Mammary epithelial cell (primary cell): ENCODE measurements at regions of chr9 and their contacts with region 1.

Region 1: GRCh38 chr9:8025551-8025950 is 226.0 kb upstream of the DMAC1 start:
- DNase-seq: no peak
- H3K4me3 ChIP-seq: no peak overlapping the region
- H3K27ac ChIP-seq: no peak overlapping the region
- H3K4me1 ChIP-seq: no peaks in the 10 kb centered on the region
- H3K27me3 ChIP-seq: no peaks in the 10 kb centered on the region
- CTCF ChIP-seq: no peak

Region 2: DNA sequence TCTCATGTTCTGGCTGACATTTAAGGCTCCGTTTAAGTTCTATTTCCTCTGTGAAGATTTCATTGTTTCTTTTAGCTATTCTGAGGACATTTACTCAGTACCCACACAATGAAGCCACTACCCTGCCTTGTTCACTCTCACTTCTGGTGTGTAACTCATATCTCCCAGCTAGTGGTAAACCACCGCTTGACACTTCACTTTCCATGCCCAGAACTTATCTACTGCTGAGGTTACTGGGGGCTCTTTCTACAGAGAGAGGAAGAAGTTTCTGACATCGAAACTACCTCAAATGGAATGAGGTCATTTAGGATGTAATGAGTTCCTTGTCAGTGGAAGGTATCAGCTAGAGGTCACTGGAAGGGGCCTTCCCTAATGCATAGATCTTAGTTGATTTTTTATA is 727.4 kb before region 1 on chr9:
- CTCF ChIA-PET with region 1: interaction called, 11 read pairs
- dilution Hi-C with region 1: no loop called
- in situ Hi-C with region 1: no loop called
- intact Hi-C with region 1: no loop called
- DNase-seq: no peak
- H3K4me3 ChIP-seq: no peak overlapping the region
- H3K27ac ChIP-seq: no peak overlapping the region
- H3K4me1 ChIP-seq: no peaks in the 10 kb centered on the region
- H3K27me3 ChIP-seq: peaks cover 4% of the 10 kb centered on the region
- CTCF ChIP-seq: no peak

Region 3: DNA sequence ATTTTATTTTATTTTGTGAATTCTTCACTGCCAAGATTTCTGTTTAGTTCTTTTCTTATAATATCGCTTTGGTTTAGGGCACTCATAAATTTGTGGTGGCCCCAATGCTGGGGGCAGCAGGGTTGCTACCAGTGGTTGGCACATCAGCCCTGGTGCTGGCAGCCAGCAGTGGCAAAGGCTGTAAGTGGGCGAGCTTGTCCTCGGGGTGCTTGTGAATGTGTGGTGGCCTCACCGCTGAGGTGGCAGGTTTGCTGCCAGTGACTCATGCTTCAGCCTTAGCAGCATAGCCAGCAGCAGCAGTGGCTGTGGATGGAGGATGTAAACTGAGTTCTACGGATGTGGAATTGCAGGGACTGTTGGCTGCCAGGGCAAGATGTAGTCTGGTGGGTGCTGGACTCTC is 36.9 kb after region 1 on chr9:
- CTCF ChIA-PET with region 1: no interaction called
- dilution Hi-C with region 1: no loop called
- in situ Hi-C with region 1: no loop called
- intact Hi-C with region 1: no loop called
- DNase-seq: no peak
- H3K4me3 ChIP-seq: no peak overlapping the region
- H3K27ac ChIP-seq: no peak overlapping the region
- H3K4me1 ChIP-seq: no peaks in the 10 kb centered on the region
- H3K27me3 ChIP-seq: no peaks in the 10 kb centered on the region
- CTCF ChIP-seq: no peak